CD8-positive, alpha-beta memory T cell (primary cell): ENCODE measurements at regions of chr6 and their contacts with region 1.

Region 1: GRCh38 chr6:155174576-155175211 is 89.1 kb upstream of the CLDN20 start:
- DNase-seq: peak; percentile 27 to 75 (median 38)
- H3K4me3 ChIP-seq: no peak overlapping the region
- H3K4me3 Mint-ChIP-seq: peak overlapping the region in 1 of 7 donors; percentile 16
- H3K27ac ChIP-seq: no peak overlapping the region
- H3K27ac Mint-ChIP-seq: peak overlapping the region in 5 of 8 donors; percentile 1 to 61 (median 2)
- H3K4me1 ChIP-seq: peaks cover 16% of the 10 kb centered on the region
- H3K4me1 Mint-ChIP-seq: peaks cover 22 to 39% (median 39%) of the 10 kb centered on the region in 3 donors
- H3K27me3 ChIP-seq: no peaks in the 10 kb centered on the region
- H3K27me3 Mint-ChIP-seq: no peaks in the 10 kb centered on the region

Region 2: DNA sequence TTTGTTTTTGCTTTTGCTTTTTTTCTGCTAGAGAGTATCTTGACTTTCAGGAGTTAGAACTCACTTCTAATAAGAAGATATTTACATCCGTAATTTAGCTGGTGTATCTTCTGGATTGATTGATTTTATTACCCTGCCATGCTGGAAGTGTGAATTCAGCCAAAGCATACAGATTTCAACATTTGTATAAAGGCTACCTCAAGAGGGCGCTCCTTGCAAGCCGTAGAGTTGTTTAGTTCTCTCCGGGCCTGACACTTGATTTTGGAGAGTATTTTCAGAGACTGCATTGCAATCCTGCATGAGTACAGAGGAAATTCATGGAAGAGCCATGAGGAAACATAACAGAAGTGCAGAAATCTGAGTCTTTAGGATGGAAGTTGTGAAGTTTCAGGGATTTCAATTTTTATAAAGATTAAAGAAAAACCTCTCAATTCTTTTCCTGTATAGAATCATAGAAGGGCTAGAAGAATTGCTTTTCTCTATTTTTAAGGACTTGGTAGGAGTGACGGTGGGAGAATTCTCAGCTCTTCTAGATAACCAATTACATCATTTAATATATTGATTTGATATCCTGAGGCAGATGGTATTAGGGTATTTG is 246.3 kb before region 1 on chr6:
- CTCF ChIA-PET with region 1: interaction called, 24 read pairs
- POLR2A ChIA-PET with region 1: no interaction called
- DNase-seq: peak; percentile 18 to 67 (median 35)
- H3K4me3 ChIP-seq: no peak overlapping the region
- H3K4me3 Mint-ChIP-seq: no peak overlapping the region
- H3K27ac ChIP-seq: no peak overlapping the region
- H3K27ac Mint-ChIP-seq: peak overlapping the region in 2 of 8 donors; percentile 5 to 21
- H3K4me1 ChIP-seq: no peaks in the 10 kb centered on the region
- H3K4me1 Mint-ChIP-seq: peaks cover 0 to 10% (median 4%) of the 10 kb centered on the region in 3 donors
- H3K27me3 ChIP-seq: no peaks in the 10 kb centered on the region
- H3K27me3 Mint-ChIP-seq: no peaks in the 10 kb centered on the region